ENCODE measurements at regions of chr16 and their contacts with region 1.

Region 1: GRCh38 chr16:75647492-75648264 is at the starts of genes KARS1 and TERF2IP:
- DNase-seq: peak; percentile 96
- ATAC-seq: peak; percentile 85
- H3K4me3 ChIP-seq: peak within 1 kb of the TSS; percentile 73 to 96 (median 85)
- H3K4me3 Mint-ChIP-seq: peak within 1 kb of the TSS; percentile 97
- H3K27ac ChIP-seq: peak within 1 kb of the TSS; percentile 85 to 87
- H3K27ac Mint-ChIP-seq: peak within 1 kb of the TSS; percentile 99
- H3K4me1 ChIP-seq: peaks cover 54 to 55% of the 10 kb centered on the region in 2 donors
- H3K4me1 Mint-ChIP-seq: peaks cover 53% of the 10 kb centered on the region
- H3K27me3 ChIP-seq: no peaks in the 10 kb centered on the region
- H3K27me3 Mint-ChIP-seq: no peaks in the 10 kb centered on the region
- CTCF ChIP-seq: no peak
- total RNA-seq, gene KARS1: 102 and 114 TPM in 2 replicates
- total RNA-seq, gene TERF2IP: 74.6 and 75.2 TPM in 2 replicates

Region 2: GRCh38 chr16:74666425-74667254 is 981.0 kb before region 1 on chr16 and contains the start of gene RFWD3:
- CTCF ChIA-PET with region 1: no interaction called
- POLR2A ChIA-PET with region 1: interaction called, 3 read pairs
- intact Hi-C with region 1: loop called (anchors 5 kb)
- DNase-seq: peak; percentile 98
- ATAC-seq: peak; percentile 100
- H3K4me3 ChIP-seq: peak within 1 kb of the TSS; percentile 80 to 99 (median 81)
- H3K4me3 Mint-ChIP-seq: peak within 1 kb of the TSS; percentile 93
- H3K27ac ChIP-seq: peak within 1 kb of the TSS; percentile 64 to 89
- H3K27ac Mint-ChIP-seq: peak within 1 kb of the TSS; percentile 92
- H3K4me1 ChIP-seq: peaks cover 10 to 14% of the 10 kb centered on the region in 2 donors
- H3K4me1 Mint-ChIP-seq: peaks cover 38% of the 10 kb centered on the region
- H3K27me3 ChIP-seq: no peaks in the 10 kb centered on the region
- H3K27me3 Mint-ChIP-seq: no peaks in the 10 kb centered on the region
- CTCF ChIP-seq: no peak
- total RNA-seq, gene RFWD3: 63.3 and 65.0 TPM in 2 replicates

Region 3: GRCh38 chr16:75148311-75149195 is 499.1 kb before region 1 on chr16 and contains the start of gene ZFP1:
- CTCF ChIA-PET with region 1: no interaction called
- POLR2A ChIA-PET with region 1: no interaction called
- intact Hi-C with region 1: loop called (anchors 1 kb)
- DNase-seq: peak; percentile 95
- ATAC-seq: peak; percentile 86
- H3K4me3 ChIP-seq: peak within 1 kb of the TSS; percentile 54 to 97 (median 95)
- H3K4me3 Mint-ChIP-seq: peak within 1 kb of the TSS; percentile 89
- H3K27ac ChIP-seq: peak within 1 kb of the TSS; percentile 86 to 90
- H3K27ac Mint-ChIP-seq: peak within 1 kb of the TSS; percentile 90
- H3K4me1 ChIP-seq: peaks cover 5 to 7% of the 10 kb centered on the region in 2 donors
- H3K4me1 Mint-ChIP-seq: peaks cover 20% of the 10 kb centered on the region
- H3K27me3 ChIP-seq: peaks cover 0 to 2% (median 0%) of the 10 kb centered on the region in 4 experiments
- H3K27me3 Mint-ChIP-seq: no peaks in the 10 kb centered on the region
- CTCF ChIP-seq: no peak
- total RNA-seq, gene ZFP1: 13.4 and 14.1 TPM in 2 replicates

Region 4: DNA sequence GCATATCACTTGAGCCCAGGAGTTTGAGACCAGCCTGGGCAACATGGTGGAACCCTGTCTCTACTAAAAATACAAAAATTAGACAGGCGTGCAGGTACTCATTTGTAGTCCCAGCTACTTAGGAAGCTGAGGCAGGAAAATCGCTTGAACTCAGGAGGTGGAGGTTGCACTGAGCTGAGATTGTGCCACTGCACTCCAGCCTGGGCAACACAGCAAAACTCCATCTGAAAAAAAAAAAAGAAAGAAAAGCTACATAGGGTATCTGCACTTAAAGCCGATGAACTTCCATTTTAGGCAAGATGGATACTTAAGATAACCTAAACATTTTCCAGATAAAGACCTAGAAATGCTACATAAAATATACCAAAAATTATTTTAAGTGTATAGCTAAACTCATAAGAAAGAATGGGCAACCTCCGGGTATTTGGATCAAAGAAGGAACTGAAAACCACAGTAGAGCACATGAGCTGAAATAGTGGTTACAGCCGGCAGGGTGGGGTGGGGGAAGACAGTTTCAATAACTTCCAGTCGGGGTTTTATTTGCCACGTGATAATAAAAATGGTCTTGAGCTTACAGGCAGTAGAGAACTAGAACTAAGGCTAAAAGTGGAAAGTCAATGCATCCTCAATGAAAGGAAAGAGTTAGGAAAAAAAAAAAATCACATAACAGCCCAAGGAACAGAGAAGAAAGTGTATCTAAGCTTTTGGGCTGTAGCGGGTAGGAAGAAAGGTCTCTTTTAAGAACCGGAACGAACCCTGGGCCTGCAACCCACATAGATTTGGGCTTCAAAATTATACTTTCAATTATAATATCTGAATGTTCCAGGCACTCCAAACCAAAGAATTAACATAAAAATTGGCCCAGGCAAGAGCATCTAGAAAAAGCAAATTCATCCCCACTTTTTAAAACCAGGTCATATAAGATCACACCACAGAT is 267.5 kb before region 1 on chr16:
- CTCF ChIA-PET with region 1: no interaction called
- POLR2A ChIA-PET with region 1: interaction called, 3 read pairs
- intact Hi-C with region 1: loop called (anchors 5 kb)
- DNase-seq: peak; percentile 87
- ATAC-seq: peak; percentile 98
- H3K4me3 ChIP-seq: no peak overlapping the region
- H3K4me3 Mint-ChIP-seq: peak overlapping the region; percentile 44
- H3K27ac ChIP-seq: no peak overlapping the region
- H3K27ac Mint-ChIP-seq: peak overlapping the region; percentile 57
- H3K4me1 ChIP-seq: peaks cover 23 to 41% of the 10 kb centered on the region in 2 donors
- H3K4me1 Mint-ChIP-seq: peaks cover 27% of the 10 kb centered on the region
- H3K27me3 ChIP-seq: peaks cover 10 to 79% (median 71%) of the 10 kb centered on the region in 4 experiments
- H3K27me3 Mint-ChIP-seq: peaks cover 77% of the 10 kb centered on the region
- CTCF ChIP-seq: no peak

Region 5: GRCh38 chr16:75464130-75464918 is 183.4 kb before region 1 on chr16 and contains the start of gene TMEM170A:
- CTCF ChIA-PET with region 1: interaction called, 7 read pairs
- POLR2A ChIA-PET with region 1: no interaction called
- intact Hi-C with region 1: loop called (anchors 1 kb)
- DNase-seq: peak; percentile 99
- ATAC-seq: peak; percentile 92
- H3K4me3 ChIP-seq: peak within 1 kb of the TSS; percentile 26 to 79 (median 72)
- H3K4me3 Mint-ChIP-seq: peak within 1 kb of the TSS; percentile 96
- H3K27ac ChIP-seq: peak within 1 kb of the TSS; percentile 92 to 93
- H3K27ac Mint-ChIP-seq: peak within 1 kb of the TSS; percentile 93
- H3K4me1 ChIP-seq: peaks cover 15 to 26% of the 10 kb centered on the region in 2 donors
- H3K4me1 Mint-ChIP-seq: peaks cover 37% of the 10 kb centered on the region
- H3K27me3 ChIP-seq: no peaks in the 10 kb centered on the region
- H3K27me3 Mint-ChIP-seq: no peaks in the 10 kb centered on the region
- CTCF ChIP-seq: peak; percentile 100
- total RNA-seq, gene TMEM170A: 37.9 and 45.6 TPM in 2 replicates

Region 6: GRCh38 chr16:75555707-75556430 is 91.8 kb before region 1 on chr16 and contains the start of gene TMEM231:
- CTCF ChIA-PET with region 1: interaction called, 4 read pairs
- POLR2A ChIA-PET with region 1: interaction called, 4 read pairs
- intact Hi-C with region 1: loop called (anchors 2 kb)
- DNase-seq: peak; percentile 96
- ATAC-seq: peak; percentile 93
- H3K4me3 ChIP-seq: peak within 1 kb of the TSS; percentile 34 to 78 (median 71)
- H3K4me3 Mint-ChIP-seq: peak within 1 kb of the TSS; percentile 97
- H3K27ac ChIP-seq: peak within 1 kb of the TSS; percentile 9 to 76
- H3K27ac Mint-ChIP-seq: peak within 1 kb of the TSS; percentile 88
- H3K4me1 ChIP-seq: peaks cover 9 to 16% of the 10 kb centered on the region in 2 donors
- H3K4me1 Mint-ChIP-seq: peaks cover 10% of the 10 kb centered on the region
- H3K27me3 ChIP-seq: peaks cover 0 to 8% (median 0%) of the 10 kb centered on the region in 4 experiments
- H3K27me3 Mint-ChIP-seq: no peaks in the 10 kb centered on the region
- CTCF ChIP-seq: peak; percentile 17
- total RNA-seq, gene TMEM231: 4.7 and 6.0 TPM in 2 replicates

Region 7: DNA sequence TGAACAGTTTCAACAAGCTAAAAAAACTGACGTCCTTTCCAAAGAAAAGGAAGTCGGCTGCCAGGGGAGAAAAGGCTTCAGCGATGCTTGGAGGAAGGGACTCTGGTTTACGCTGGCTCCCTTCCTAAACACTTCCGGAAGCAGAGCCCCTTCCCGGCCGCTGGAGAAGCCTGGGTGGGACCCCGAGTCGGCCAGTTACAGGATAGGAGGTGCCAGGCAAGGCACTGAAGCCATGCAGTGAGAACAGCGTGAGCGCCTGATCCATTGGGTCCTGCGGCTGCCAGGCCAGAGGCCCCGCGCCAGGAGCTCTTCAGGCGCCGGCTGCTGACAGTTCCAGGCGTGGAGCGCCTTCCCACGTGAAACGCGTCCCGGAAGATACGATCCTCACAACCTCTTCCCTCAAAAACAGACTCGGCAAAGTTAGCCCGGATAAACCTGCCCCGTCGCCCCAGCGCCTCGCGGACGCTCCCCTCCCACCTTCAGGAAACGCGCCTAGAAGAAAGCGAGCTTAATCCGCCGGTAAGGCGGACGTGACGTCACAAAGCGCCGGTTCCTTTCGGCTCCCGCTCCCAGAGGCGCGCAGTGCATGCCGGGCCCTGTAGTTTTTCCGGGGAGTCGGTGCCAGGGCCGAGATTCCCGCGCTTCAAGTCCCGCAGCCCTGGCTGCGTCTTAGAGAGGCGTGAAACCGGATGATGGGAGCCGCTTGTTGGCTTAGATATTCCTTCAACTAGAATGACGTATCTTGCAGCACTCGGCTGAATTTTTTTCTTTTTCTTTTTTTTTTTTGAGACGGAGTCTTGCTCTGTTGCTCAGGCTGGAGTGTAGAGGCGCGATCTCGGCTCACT is 24.7 kb before region 1 on chr16 and contains the start of gene ADAT1:
- CTCF ChIA-PET with region 1: interaction called, 19 read pairs
- POLR2A ChIA-PET with region 1: interaction called, 15 read pairs
- intact Hi-C with region 1: loop called (anchors 1 kb)
- DNase-seq: peak; percentile 98
- ATAC-seq: peak; percentile 94
- H3K4me3 ChIP-seq: peak within 1 kb of the TSS; percentile 68 to 85 (median 80)
- H3K4me3 Mint-ChIP-seq: peak within 1 kb of the TSS; percentile 96
- H3K27ac ChIP-seq: peak within 1 kb of the TSS; percentile 87 to 91
- H3K27ac Mint-ChIP-seq: peak within 1 kb of the TSS; percentile 98
- H3K4me1 ChIP-seq: peaks cover 12 to 27% of the 10 kb centered on the region in 2 donors
- H3K4me1 Mint-ChIP-seq: peaks cover 27% of the 10 kb centered on the region
- H3K27me3 ChIP-seq: no peaks in the 10 kb centered on the region
- H3K27me3 Mint-ChIP-seq: no peaks in the 10 kb centered on the region
- CTCF ChIP-seq: no peak
- total RNA-seq, gene ADAT1: 71.2 and 75.2 TPM in 2 replicates